BJ (cell line): ENCODE measurements at regions of chr4 and their contacts with region 1.

Region 1: DNA sequence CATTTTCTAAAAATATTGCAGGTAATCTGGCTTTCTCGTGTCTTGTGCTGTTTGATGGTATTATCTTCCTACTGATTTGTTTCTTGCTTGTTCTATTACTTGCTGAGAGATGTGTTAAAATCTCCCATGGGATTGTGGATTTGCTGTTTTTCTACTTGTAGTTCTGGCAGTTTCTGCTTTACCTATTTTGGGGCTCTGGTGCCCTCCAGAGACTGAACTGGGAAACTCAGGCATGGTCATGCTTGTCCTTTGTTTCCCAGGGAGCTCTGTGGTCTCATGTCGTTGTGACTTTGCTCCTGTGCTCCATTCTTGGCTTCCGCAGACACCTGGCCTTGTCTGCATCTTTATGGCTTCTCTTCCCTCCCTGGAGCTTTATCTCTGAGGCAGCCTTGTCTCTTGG is 39.5 kb downstream of the NSD2 start:
- DNase-seq: no peak
- H3K4me3 ChIP-seq: no peak overlapping the region
- H3K27me3 ChIP-seq: no peaks in the 10 kb centered on the region
- CTCF ChIP-seq: peak; percentile 78

Region 2: GRCh38 chr4:1842993-1843448 is 67.6 kb before region 1 on chr4:
- CTCF ChIA-PET with region 1: interaction called, 10 read pairs
- POLR2A ChIA-PET with region 1: no interaction called
- DNase-seq: peak; percentile 61
- H3K4me3 ChIP-seq: no peak overlapping the region
- H3K27me3 ChIP-seq: no peaks in the 10 kb centered on the region
- CTCF ChIP-seq: no peak

Region 3: DNA sequence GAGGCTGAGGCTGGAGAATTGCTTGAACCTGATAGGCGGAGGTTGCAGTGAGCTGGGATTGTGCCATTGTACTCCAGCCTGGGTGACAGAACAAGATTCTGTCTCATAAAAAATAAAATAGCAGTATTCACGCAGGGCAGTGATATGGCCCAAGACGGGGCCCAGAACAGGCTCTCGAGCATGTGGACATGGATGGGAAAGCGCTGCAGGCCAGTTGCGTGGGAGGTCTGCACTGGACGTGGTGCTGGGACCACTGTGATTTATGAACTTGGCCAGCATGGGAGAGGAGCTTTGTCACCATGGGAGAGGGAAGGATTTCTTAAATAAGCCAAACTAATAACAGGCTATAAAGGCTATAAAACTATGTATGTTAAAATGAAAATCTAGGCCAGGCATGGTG is 12.2 kb after region 1 on chr4:
- CTCF ChIA-PET with region 1: interaction called, 14 read pairs
- POLR2A ChIA-PET with region 1: no interaction called
- DNase-seq: no peak
- H3K4me3 ChIP-seq: no peak overlapping the region
- H3K27me3 ChIP-seq: no peaks in the 10 kb centered on the region
- CTCF ChIP-seq: no peak